Left colon (tissue), 2 donors: ENCODE measurements at regions of chr6 and their contacts with region 1.

Region 1: GRCh38 chr6:20534295-20535262 is at the start of gene CDKAL1:
- DNase-seq: peak; percentile 87 to 89
- ATAC-seq: peak; percentile 97
- total RNA-seq, gene CDKAL1: 11.7 to 12.5 TPM

Region 2: DNA sequence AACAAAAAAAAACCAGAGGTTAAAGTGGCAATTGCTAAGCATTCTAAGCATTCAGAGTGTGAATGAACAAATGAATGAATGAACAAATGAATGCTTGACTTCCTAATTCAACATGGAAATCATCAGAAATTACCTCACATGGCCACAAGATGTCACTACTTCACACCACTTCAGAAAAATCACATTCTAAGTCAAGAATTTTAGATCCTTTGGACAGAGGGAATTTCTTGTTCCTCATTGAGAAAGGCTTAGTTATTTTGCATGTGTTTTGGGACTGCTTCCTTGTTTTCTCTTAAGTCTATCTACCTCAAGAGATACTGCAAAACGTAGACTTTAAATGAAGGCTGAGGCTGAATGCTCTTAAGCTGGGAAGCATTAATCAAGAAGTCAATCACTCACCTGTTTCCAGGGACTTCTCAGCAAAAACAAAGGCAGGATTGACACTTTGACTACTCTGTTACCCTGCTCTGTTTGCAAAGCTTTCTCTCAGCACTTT is 442.5 kb before region 1 on chr6:
- intact Hi-C with region 1: loop called in 1 of 2 experiments (anchors 5 kb)
- DNase-seq: no peak
- ATAC-seq: peak; percentile 53

Region 3: GRCh38 chr6:20291764-20292580 is 242.6 kb before region 1 on chr6:
- intact Hi-C with region 1: loop called (anchors 2 to 5 kb)
- DNase-seq: peak; percentile 68 to 87
- ATAC-seq: peak; percentile 94

Region 4: GRCh38 chr6:20401205-20402091 is 133.1 kb before region 1 on chr6 and contains the start of gene E2F3:
- intact Hi-C with region 1: loop called in 1 of 2 experiments (anchors 10 kb)
- DNase-seq: peak; percentile 99 to 100
- ATAC-seq: peak; percentile 82
- total RNA-seq, gene E2F3: 9.1 to 9.5 TPM

Region 5: DNA sequence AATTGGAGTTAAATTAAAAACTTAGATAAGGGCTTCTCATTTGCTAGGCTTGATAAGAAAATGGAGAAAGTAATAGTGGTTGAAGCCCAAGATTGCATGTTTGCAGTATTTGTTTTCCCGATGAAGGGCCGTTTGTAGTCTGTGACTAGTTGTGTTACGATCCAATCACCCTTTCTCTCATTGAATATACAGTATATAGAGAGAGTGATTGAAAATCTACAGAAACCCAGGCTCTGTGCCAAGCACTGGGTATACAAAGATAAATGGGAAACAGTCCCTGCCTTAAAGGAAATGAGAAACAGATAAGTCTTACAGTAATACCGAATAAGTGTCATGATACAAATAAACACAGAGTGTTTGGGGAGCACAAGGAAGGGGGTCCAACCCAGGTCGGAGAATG is 55.5 kb before region 1 on chr6:
- intact Hi-C with region 1: no loop called
- DNase-seq: no peak
- ATAC-seq: no peak